ENCODE measurements at regions of chr1 and their contacts with region 1.

Region 1: DNA sequence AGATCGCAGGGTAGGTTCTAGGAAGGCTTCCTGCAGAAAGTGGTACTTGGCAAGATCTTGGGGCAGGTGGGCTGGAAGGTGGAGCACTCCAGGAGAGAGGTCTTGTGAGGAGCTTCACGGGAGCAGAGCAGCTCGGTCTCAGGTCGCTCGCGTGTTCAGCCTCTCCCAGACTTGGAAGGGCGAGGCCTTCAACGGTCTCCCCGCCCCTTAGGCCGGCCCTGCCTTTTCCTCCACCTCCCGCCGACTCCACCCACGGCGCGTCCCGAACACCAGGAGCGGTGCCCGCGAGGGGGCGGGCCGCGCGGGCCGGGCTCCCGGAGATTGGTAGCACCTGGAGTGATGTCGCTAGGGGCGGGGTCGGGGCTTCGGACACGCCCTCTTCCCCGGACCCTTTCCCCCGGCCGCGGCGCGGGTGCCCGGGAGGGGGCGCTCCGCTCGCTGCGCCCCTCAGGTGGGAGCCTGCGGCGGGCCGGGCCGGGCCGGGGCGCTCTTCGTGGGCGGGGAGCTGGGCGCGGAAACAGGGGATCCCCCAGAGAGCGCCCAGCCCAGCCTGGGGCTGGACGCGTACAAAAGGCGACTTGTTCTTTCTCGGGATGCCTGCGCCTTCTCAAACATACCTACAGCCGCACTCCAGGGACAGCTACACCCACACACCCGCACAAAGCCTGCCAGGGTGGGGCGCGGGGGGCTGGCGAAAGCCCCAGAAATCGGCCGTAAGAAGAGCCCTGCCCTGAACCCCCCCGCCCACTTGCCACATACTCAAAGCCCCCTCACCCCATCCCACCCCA is 35.5 kb downstream of the AHDC1 start:
- DNase-seq: peak; percentile 93
- ATAC-seq: peak; percentile 59
- H3K4me3 Mint-ChIP-seq: peak overlapping the region; percentile 58
- H3K27ac Mint-ChIP-seq: peak overlapping the region; percentile 39; the same call in 1 of the 2 replicates
- H3K4me1 Mint-ChIP-seq: peaks cover 88% of the 10 kb centered on the region
- H3K27me3 Mint-ChIP-seq: no peaks in the 10 kb centered on the region
- CTCF ChIP-seq: peak; percentile 70

Region 2: GRCh38 chr1:27392096-27392777 is 176.3 kb before region 1 on chr1 and contains the start of gene GPR3:
- CTCF ChIA-PET with region 1: interaction called, 10 read pairs
- POLR2A ChIA-PET with region 1: no interaction called
- DNase-seq: peak; percentile 96
- ATAC-seq: peak; percentile 72
- H3K4me3 Mint-ChIP-seq: peak within 1 kb of the TSS; percentile 91
- H3K27ac Mint-ChIP-seq: peak within 1 kb of the TSS; percentile 95
- H3K4me1 Mint-ChIP-seq: peaks cover 24% of the 10 kb centered on the region
- H3K27me3 Mint-ChIP-seq: peaks cover 4% of the 10 kb centered on the region
- CTCF ChIP-seq: peak; percentile 20; the same call in 1 of the 2 replicates
- total RNA-seq, gene GPR3: 7.8 to 12.4 TPM (median 7.8 TPM) in 3 replicates

Region 3: GRCh38 chr1:27416387-27417111 is 151.9 kb before region 1 on chr1:
- CTCF ChIA-PET with region 1: interaction called, 11 read pairs
- POLR2A ChIA-PET with region 1: no interaction called
- DNase-seq: no peak
- ATAC-seq: peak; percentile 67
- H3K4me3 Mint-ChIP-seq: no peak overlapping the region
- H3K27ac Mint-ChIP-seq: peak overlapping the region; percentile 50; the same call in 1 of the 2 replicates
- H3K4me1 Mint-ChIP-seq: peaks cover 41% of the 10 kb centered on the region
- H3K27me3 Mint-ChIP-seq: no peaks in the 10 kb centered on the region
- CTCF ChIP-seq: 0 out of 2 replicates have a peak, but pooled peaks have one; percentile 1

Region 4: DNA sequence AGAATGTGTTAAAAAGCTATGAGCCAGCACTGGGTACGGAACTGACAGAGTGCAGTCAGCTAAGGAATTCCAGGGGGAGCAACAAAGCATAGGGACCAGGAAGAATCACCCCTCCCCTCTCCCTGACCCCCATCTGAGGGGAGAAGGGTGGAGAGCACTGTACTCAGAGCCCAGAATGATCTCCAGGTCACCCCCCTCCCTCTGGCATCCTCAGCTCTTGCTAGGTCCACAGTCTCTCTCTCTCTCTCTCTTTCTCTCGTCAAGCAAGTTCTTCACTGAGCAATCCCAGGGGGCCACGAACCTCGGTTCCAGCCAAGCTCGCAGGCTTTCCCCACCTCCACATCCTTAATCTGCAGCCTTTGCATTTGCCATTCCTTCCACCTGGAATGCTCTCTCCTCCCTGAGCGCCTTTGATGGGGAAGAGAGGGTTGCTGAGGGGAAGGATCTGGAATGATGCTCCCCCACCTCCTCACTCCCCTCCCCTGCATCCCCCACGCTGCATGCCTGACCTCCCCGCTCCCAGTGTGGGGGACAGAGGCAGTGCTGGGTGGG is 71.8 kb before region 1 on chr1:
- CTCF ChIA-PET with region 1: interaction called, 29 read pairs
- POLR2A ChIA-PET with region 1: no interaction called
- DNase-seq: peak; percentile 76
- ATAC-seq: peak; percentile 97
- H3K4me3 Mint-ChIP-seq: peak overlapping the region; percentile 53
- H3K27ac Mint-ChIP-seq: peak overlapping the region; percentile 90
- H3K4me1 Mint-ChIP-seq: peaks cover 23% of the 10 kb centered on the region
- H3K27me3 Mint-ChIP-seq: no peaks in the 10 kb centered on the region
- CTCF ChIP-seq: no peak

Region 5: DNA sequence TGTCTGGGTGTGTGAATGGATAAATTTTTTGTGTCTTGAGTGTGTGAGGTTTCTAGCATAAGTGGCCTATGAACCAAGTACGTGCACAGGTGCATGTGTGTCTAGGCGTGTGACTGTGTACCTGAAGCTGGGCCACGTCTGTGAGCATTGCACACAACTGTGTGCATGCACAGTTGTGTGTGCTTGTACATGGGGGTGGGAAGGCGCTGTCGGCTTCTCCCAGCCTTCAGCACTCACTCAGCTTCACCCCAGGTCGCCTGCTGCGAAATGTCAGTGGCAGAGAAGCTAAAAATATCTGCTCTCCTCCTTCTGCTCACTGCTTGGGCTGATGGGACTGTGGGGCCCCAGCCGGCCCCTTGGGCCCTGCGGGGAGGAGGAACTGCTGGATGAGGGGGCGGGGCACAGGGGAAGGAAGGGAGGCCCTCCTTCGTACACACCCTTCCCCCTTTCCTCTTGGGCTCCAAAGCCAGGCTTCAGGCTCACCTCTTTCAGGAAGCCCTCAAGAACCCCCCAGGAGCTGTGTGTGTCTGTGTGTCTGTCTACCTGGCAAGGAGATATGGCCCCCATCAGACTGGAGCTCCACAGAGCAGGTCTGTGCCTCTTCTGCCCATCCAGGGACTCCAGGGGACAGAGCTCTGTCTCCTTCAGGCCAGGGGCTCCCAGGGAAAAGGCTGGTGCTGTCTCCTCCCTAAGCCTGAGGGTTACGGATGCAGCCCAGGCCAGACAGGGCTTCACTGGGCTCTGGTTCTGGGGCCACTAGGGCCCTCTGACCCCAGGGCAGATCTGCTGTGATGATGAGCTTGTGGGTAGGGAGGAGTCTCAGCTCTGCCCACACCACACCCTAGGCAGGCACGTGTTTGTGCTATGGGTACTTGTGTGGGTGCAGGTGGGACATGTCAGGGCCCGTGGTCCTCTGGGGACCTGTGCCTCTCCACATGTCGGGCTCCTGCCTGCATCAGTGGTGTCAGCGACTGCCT is 42.9 kb before region 1 on chr1:
- CTCF ChIA-PET with region 1: interaction called, 15 read pairs
- POLR2A ChIA-PET with region 1: interaction called, 5 read pairs
- DNase-seq: peak; percentile 79
- ATAC-seq: peak; percentile 50
- H3K4me3 Mint-ChIP-seq: peak overlapping the region; percentile 55
- H3K27ac Mint-ChIP-seq: peak overlapping the region; percentile 85
- H3K4me1 Mint-ChIP-seq: peaks cover 70% of the 10 kb centered on the region
- H3K27me3 Mint-ChIP-seq: no peaks in the 10 kb centered on the region; the same call in 1 of the 2 replicates
- CTCF ChIP-seq: no peak

Region 6: DNA sequence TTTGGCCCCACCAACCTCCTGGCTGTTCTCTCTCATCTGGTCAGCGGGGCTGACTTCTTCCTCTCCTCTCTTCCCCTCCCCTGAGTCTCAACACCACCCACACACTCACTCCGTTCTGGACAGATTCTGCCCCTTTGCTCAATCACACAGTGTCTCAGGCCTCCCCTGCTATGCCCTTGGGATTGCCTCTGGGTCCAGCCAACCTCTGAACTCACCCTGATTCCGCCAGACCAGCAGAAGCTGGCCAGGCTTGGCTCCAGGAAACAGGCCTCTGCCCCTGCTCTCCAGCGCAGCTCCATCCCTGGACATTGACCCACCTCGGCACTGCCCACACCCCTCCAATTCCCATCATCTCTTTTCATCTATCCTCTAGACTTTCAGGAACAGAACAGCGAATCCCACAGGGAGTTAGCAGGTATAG is 13.3 kb after region 1 on chr1:
- CTCF ChIA-PET with region 1: interaction called, 20 read pairs
- POLR2A ChIA-PET with region 1: no interaction called
- DNase-seq: no peak
- ATAC-seq: no peak
- H3K4me3 Mint-ChIP-seq: no peak overlapping the region
- H3K27ac Mint-ChIP-seq: peak overlapping the region; percentile 21
- H3K4me1 Mint-ChIP-seq: peaks cover 10% of the 10 kb centered on the region
- H3K27me3 Mint-ChIP-seq: no peaks in the 10 kb centered on the region
- CTCF ChIP-seq: no peak

Region 7: DNA sequence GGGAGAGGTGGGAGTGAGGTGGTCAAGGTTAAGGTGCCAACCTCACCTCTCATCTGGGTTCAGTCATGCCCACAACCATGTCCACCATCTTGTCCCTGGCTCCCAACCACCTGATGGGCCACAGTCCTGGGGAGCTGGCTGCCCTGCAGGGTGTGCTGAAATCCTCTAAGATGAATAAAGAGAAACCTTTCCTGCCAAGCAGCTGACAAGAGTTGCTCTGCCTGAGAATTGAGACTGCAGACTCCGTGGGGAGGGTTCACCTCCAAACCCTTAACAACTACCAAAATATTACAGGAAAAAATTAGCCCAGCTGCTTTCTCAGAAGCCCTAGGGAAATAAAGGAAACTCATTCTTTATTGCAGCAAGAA is 81.7 kb after region 1 on chr1:
- CTCF ChIA-PET with region 1: no interaction called
- POLR2A ChIA-PET with region 1: no interaction called
- DNase-seq: no peak
- ATAC-seq: no peak
- H3K4me3 Mint-ChIP-seq: no peak overlapping the region
- H3K27ac Mint-ChIP-seq: peak overlapping the region; percentile 42; the same call in 1 of the 2 replicates
- H3K4me1 Mint-ChIP-seq: peaks cover 21% of the 10 kb centered on the region
- H3K27me3 Mint-ChIP-seq: no peaks in the 10 kb centered on the region
- CTCF ChIP-seq: no peak

Region 8: GRCh38 chr1:27662707-27663393 is 94.4 kb after region 1 on chr1:
- CTCF ChIA-PET with region 1: interaction called, 11 read pairs
- POLR2A ChIA-PET with region 1: no interaction called
- DNase-seq: peak; percentile 95
- ATAC-seq: peak; percentile 81
- H3K4me3 Mint-ChIP-seq: no peak overlapping the region
- H3K27ac Mint-ChIP-seq: peak overlapping the region; percentile 75
- H3K4me1 Mint-ChIP-seq: peaks cover 29% of the 10 kb centered on the region
- H3K27me3 Mint-ChIP-seq: peaks cover 3% of the 10 kb centered on the region; the same call in 1 of the 2 replicates
- CTCF ChIP-seq: peak; percentile 91

Measured in WTC11 (cell line).